Activated CD4-positive, alpha-beta memory T cell treated with anti-CD3 and anti-CD28 coated beads for 36 hours (primary cell): ENCODE measurements at regions of chr10 and their contacts with region 1.

Region 1: GRCh38 chr10:44864637-44865288 is 46.4 kb upstream of the TMEM72 start:
- DNase-seq: peak; percentile 84
- H3K4me3 Mint-ChIP-seq: peak overlapping the region; percentile 81
- H3K27ac Mint-ChIP-seq: no peak overlapping the region
- H3K4me1 Mint-ChIP-seq: peaks cover 7% of the 10 kb centered on the region
- H3K27me3 Mint-ChIP-seq: peaks cover 36% of the 10 kb centered on the region

Region 2: DNA sequence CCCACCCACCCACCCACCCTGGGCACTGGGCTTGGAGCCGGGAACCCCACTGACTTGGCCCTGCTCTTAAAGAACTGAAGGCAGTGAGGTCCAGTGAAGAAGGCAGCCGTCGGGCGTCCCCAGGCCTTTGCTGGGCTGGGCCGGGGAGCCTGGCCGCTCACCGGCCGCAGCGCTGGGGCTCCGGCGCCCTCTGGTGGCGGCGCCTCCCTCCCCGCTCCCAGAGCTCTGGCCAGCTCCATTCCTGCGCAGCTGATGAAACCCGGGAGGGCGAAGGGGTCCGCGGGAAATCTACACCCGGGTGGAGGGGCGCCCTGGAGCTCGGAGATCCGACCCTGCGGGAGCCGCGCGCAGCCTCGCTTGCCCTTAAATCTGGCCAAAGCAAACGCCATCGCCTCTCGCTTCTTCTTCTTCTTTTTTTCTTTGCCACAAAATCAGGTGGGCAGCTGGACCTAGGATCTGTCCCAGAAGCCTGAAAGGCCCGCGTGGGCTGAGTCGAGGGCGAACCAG is 478.2 kb before region 1 on chr10:
- CTCF ChIA-PET with region 1: no interaction called
- POLR2A ChIA-PET with region 1: no interaction called
- intact Hi-C with region 1: loop called (anchors 10 kb)
- DNase-seq: peak; percentile 40
- H3K4me3 Mint-ChIP-seq: no peak overlapping the region
- H3K27ac Mint-ChIP-seq: no peak overlapping the region
- H3K4me1 Mint-ChIP-seq: peaks cover 2% of the 10 kb centered on the region
- H3K27me3 Mint-ChIP-seq: peaks cover 37% of the 10 kb centered on the region

Region 3: GRCh38 chr10:44774676-44775401 is 89.9 kb before region 1 on chr10:
- CTCF ChIA-PET with region 1: no interaction called
- POLR2A ChIA-PET with region 1: no interaction called
- intact Hi-C with region 1: no loop called
- DNase-seq: no peak
- H3K4me3 Mint-ChIP-seq: no peak overlapping the region
- H3K27ac Mint-ChIP-seq: no peak overlapping the region
- H3K4me1 Mint-ChIP-seq: no peaks in the 10 kb centered on the region
- H3K27me3 Mint-ChIP-seq: peaks cover 5% of the 10 kb centered on the region

Region 4: DNA sequence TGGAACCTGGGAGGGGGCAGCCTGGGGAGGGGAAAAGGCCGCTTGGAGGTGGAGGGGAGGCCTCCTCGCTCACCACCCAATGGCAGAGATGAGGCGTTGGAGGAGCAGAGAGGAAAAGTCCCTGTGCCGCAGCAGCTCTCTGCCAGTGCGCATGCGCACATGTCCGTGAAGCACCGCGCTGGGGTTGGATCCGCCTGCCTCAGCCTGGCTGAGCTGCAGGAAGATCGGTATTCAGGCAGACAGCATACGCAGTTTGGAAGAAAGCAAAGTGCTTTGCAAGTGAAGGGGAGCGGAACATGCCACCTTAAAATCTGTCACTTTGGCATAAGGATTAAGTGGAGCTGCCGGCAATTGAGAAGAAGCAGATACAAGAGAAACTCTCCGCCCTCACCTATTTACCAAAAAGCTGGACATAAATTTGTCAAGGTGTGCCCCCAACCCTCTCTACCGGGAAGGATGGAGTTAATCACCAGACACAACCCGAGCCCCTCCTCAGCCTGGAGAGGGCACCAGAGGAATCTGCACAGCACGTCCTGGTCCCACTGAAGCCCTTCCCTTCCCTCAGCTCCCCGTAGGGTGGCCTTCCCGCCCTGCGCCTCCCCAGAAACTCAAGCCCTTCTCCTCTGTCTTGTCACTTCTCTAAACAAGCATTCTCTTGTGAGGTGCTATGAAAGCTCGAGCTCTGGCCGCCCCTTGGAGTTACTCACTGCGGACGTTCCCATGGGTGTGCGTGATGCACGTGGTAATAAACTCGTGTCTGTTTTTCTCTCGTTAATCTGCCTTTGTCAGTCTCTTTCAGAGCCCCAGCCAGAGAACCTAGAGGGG is 14.2 kb after region 1 on chr10:
- CTCF ChIA-PET with region 1: interaction called, 21 read pairs
- POLR2A ChIA-PET with region 1: no interaction called
- intact Hi-C with region 1: no loop called
- DNase-seq: peak; percentile 86
- H3K4me3 Mint-ChIP-seq: peak overlapping the region; percentile 82
- H3K27ac Mint-ChIP-seq: peak overlapping the region; percentile 52
- H3K4me1 Mint-ChIP-seq: peaks cover 10% of the 10 kb centered on the region
- H3K27me3 Mint-ChIP-seq: peaks cover 8% of the 10 kb centered on the region